ENCODE measurements at regions of chr4 and their contacts with region 1.

Region 1: DNA sequence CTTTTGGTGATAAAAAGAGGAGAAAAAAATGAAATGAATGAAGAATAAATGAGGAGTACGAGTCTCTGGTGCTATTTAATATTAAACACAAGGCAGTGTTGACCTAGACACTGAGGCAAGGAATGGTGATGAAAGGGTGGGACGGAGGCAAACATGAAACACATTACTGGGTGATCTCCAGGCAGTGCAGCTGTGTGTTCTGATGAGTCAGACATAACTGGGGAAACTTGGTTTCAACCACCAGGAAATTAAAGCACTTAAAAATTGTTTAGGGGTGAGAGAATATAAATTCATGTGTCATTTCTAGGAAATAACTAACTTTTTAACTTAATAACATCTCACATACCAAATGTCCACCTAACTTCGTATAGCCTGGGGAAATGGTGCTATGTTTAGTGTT is 19.7 kb upstream of the CXCL6 start:
- DNase-seq: peak; percentile 89
- ATAC-seq: peak; percentile 97
- H3K4me3 ChIP-seq: no peak overlapping the region
- H3K27ac ChIP-seq: no peak overlapping the region
- H3K4me1 ChIP-seq: 0 out of 2 replicates have a peak, but pooled peaks cover 1% of the 10 kb centered on the region
- H3K27me3 ChIP-seq: peaks cover under 1% of the 10 kb centered on the region; the same call in 1 of the 2 replicates
- CTCF ChIP-seq: no peak
- POLR2A ChIP-seq: no peak
- RAD21 ChIP-seq: no peak

Region 2: DNA sequence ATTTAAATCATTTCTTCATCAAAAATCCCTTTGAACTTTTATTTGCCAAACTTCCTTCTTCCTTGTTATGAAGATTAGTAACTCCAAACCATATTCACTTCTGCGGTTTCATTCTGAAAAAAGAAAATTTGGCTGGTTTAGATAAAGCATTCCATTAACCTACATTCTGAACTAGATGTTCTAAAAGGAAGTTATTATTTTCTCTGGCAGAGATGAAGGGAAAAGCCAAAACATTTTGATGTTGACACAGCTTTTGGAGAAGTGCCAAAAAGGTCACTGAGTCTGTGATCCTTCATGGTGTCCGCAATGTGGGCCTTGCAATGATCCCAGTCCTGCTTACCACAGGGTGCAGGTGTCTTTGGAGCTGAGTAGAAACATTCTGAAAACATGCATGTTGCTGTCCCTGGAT is 40.5 kb before region 1 on chr4:
- CTCF ChIA-PET with region 1: no interaction called
- POLR2A ChIA-PET with region 1: no interaction called
- dilution Hi-C with region 1: no loop called
- in situ Hi-C with region 1: no loop called
- intact Hi-C with region 1: loop called (anchors 5 kb)
- DNase-seq: peak; percentile 81
- ATAC-seq: peak; percentile 79
- H3K4me3 ChIP-seq: no peak overlapping the region
- H3K27ac ChIP-seq: no peak overlapping the region
- H3K4me1 ChIP-seq: peaks cover 2% of the 10 kb centered on the region; the same call in 1 of the 2 replicates
- H3K27me3 ChIP-seq: no peaks in the 10 kb centered on the region
- CTCF ChIP-seq: no peak
- POLR2A ChIP-seq: no peak
- RAD21 ChIP-seq: no peak

Region 3: GRCh38 chr4:73803213-73803612 is 13.6 kb before region 1 on chr4:
- CTCF ChIA-PET with region 1: no interaction called
- POLR2A ChIA-PET with region 1: no interaction called
- dilution Hi-C with region 1: no loop called
- in situ Hi-C with region 1: no loop called
- intact Hi-C with region 1: no loop called
- DNase-seq: no peak
- ATAC-seq: no peak
- H3K4me3 ChIP-seq: no peak overlapping the region
- H3K27ac ChIP-seq: no peak overlapping the region
- H3K4me1 ChIP-seq: no peaks in the 10 kb centered on the region
- H3K27me3 ChIP-seq: no peaks in the 10 kb centered on the region; the same call in 1 of the 2 replicates
- CTCF ChIP-seq: no peak
- POLR2A ChIP-seq: no peak
- RAD21 ChIP-seq: no peak

Region 4: GRCh38 chr4:73936969-73937368 is 120.2 kb after region 1 on chr4:
- CTCF ChIA-PET with region 1: no interaction called
- POLR2A ChIA-PET with region 1: no interaction called
- dilution Hi-C with region 1: no loop called
- in situ Hi-C with region 1: no loop called
- intact Hi-C with region 1: no loop called
- DNase-seq: no peak
- ATAC-seq: no peak
- H3K4me3 ChIP-seq: no peak overlapping the region
- H3K27ac ChIP-seq: no peak overlapping the region
- H3K4me1 ChIP-seq: no peaks in the 10 kb centered on the region
- H3K27me3 ChIP-seq: peaks cover 22% of the 10 kb centered on the region
- CTCF ChIP-seq: no peak
- POLR2A ChIP-seq: no peak
- RAD21 ChIP-seq: no peak

Region 5: GRCh38 chr4:74394476-74395136 is 577.8 kb after region 1 on chr4:
- CTCF ChIA-PET with region 1: no interaction called
- POLR2A ChIA-PET with region 1: no interaction called
- dilution Hi-C with region 1: no loop called
- in situ Hi-C with region 1: no loop called
- intact Hi-C with region 1: no loop called
- DNase-seq: peak; percentile 79
- ATAC-seq: peak; percentile 54
- H3K4me3 ChIP-seq: no peak overlapping the region
- H3K27ac ChIP-seq: no peak overlapping the region
- H3K4me1 ChIP-seq: peaks cover 9% of the 10 kb centered on the region; the same call in 1 of the 2 replicates
- H3K27me3 ChIP-seq: no peaks in the 10 kb centered on the region
- CTCF ChIP-seq: no peak
- POLR2A ChIP-seq: no peak
- RAD21 ChIP-seq: no peak